Activated CD4-positive, alpha-beta T cell treated with anti-CD3 and anti-CD28 coated beads for 36 hours (primary cell): ENCODE measurements at regions of chr2 and their contacts with region 1.

Region 1: GRCh38 chr2:237132799-237133198 is 47.1 kb downstream of the COPS8 start:
- DNase-seq: peak; percentile 28
- ATAC-seq: no peak
- H3K4me3 Mint-ChIP-seq: no peak overlapping the region
- H3K27ac Mint-ChIP-seq: no peak overlapping the region
- H3K4me1 Mint-ChIP-seq: no peaks in the 10 kb centered on the region
- H3K27me3 Mint-ChIP-seq: no peaks in the 10 kb centered on the region

Region 2: GRCh38 chr2:237092920-237093781 is 39.6 kb before region 1 on chr2:
- CTCF ChIA-PET with region 1: no interaction called
- POLR2A ChIA-PET with region 1: no interaction called
- intact Hi-C with region 1: no loop called
- DNase-seq: no peak
- ATAC-seq: no peak
- H3K4me3 Mint-ChIP-seq: no peak overlapping the region
- H3K27ac Mint-ChIP-seq: no peak overlapping the region
- H3K4me1 Mint-ChIP-seq: peaks cover 5% of the 10 kb centered on the region
- H3K27me3 Mint-ChIP-seq: no peaks in the 10 kb centered on the region

Region 3: GRCh38 chr2:237122214-237122666 is 10.6 kb before region 1 on chr2:
- CTCF ChIA-PET with region 1: interaction called, 18 read pairs
- POLR2A ChIA-PET with region 1: no interaction called
- intact Hi-C with region 1: no loop called
- DNase-seq: peak; percentile 85
- ATAC-seq: peak; percentile 98
- H3K4me3 Mint-ChIP-seq: no peak overlapping the region
- H3K27ac Mint-ChIP-seq: peak overlapping the region; percentile 79
- H3K4me1 Mint-ChIP-seq: peaks cover 3% of the 10 kb centered on the region
- H3K27me3 Mint-ChIP-seq: no peaks in the 10 kb centered on the region